B cell (primary cell): ENCODE measurements at regions of chr17 and their contacts with region 1.

Region 1: DNA sequence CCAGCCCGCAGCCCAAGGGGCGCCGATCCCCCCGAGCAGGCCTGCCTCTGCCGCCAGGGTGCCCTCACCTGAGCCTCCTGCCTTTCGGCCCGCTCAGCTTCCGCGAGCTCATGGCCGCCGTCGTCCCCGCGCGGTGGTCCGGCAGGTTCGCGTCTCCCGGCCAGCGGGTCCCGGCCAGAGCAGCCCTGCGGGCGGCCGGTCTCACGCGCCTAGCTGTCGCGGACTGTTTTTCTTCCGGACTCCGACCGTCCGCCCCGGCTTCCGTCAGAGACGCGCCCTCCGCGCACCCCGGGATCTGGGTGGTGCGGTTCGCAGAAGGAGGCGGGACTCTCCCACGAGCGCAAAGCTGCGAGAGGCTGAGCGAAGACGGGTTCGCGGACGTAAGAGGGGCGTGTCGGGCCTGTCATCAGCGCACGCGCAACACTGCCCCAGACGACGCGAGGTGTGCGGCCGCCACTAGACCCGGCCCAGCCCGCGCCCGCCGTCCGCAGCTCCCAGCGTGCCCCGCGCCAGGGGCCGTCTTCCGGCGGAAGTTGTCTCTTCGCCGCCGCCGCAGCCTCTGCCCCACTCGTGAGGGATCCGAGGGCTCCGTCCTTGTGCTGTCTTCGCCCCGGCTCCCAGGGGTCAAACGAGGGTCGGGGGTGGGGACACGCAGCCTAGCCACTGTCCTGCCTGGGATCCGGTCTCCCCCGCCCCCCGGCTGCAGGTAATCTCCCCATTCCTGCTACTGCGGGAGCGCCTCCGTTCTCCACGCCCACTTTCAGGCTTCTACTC is at the start of gene INPP5K:
- DNase-seq: peak; percentile 99
- ATAC-seq: peak; percentile 90
- H3K4me3 ChIP-seq: peak within 1 kb of the TSS; percentile 88 to 96 (median 94)
- H3K4me3 Mint-ChIP-seq: peak within 1 kb of the TSS; percentile 88
- H3K27ac ChIP-seq: peak within 1 kb of the TSS; percentile 67 to 90
- H3K27ac Mint-ChIP-seq: peak within 1 kb of the TSS; percentile 92
- H3K4me1 ChIP-seq: peaks cover 10 to 28% of the 10 kb centered on the region in 2 donors
- H3K4me1 Mint-ChIP-seq: peaks cover 21% of the 10 kb centered on the region
- H3K27me3 ChIP-seq: no peaks in the 10 kb centered on the region
- H3K27me3 Mint-ChIP-seq: no peaks in the 10 kb centered on the region
- CTCF ChIP-seq: no peak
- total RNA-seq, gene INPP5K: 76.7 and 77.9 TPM in 2 replicates

Region 2: GRCh38 chr17:1206026-1206777 is 310.4 kb before region 1 on chr17:
- CTCF ChIA-PET with region 1: no interaction called
- POLR2A ChIA-PET with region 1: no interaction called
- intact Hi-C with region 1: no loop called
- DNase-seq: no peak
- ATAC-seq: no peak
- H3K4me3 ChIP-seq: no peak overlapping the region
- H3K4me3 Mint-ChIP-seq: no peak overlapping the region
- H3K27ac ChIP-seq: no peak overlapping the region
- H3K27ac Mint-ChIP-seq: no peak overlapping the region
- H3K4me1 ChIP-seq: peaks cover 23 to 38% of the 10 kb centered on the region in 2 donors
- H3K4me1 Mint-ChIP-seq: peaks cover 38% of the 10 kb centered on the region
- H3K27me3 ChIP-seq: no peaks in the 10 kb centered on the region
- H3K27me3 Mint-ChIP-seq: no peaks in the 10 kb centered on the region
- CTCF ChIP-seq: no peak

Region 3: GRCh38 chr17:1275962-1276736 is 240.4 kb before region 1 on chr17:
- CTCF ChIA-PET with region 1: interaction called, 5 read pairs
- POLR2A ChIA-PET with region 1: no interaction called
- intact Hi-C with region 1: loop called (anchors 1 kb)
- DNase-seq: peak; percentile 79
- ATAC-seq: peak; percentile 85
- H3K4me3 ChIP-seq: no peak overlapping the region
- H3K4me3 Mint-ChIP-seq: peak overlapping the region; percentile 47
- H3K27ac ChIP-seq: no peak overlapping the region
- H3K27ac Mint-ChIP-seq: no peak overlapping the region
- H3K4me1 ChIP-seq: peaks cover 7 to 16% of the 10 kb centered on the region in 2 donors
- H3K4me1 Mint-ChIP-seq: peaks cover 18% of the 10 kb centered on the region
- H3K27me3 ChIP-seq: peaks cover 0 to 16% (median 2%) of the 10 kb centered on the region in 4 experiments
- H3K27me3 Mint-ChIP-seq: peaks cover 13% of the 10 kb centered on the region
- CTCF ChIP-seq: peak; percentile 81

Region 4: DNA sequence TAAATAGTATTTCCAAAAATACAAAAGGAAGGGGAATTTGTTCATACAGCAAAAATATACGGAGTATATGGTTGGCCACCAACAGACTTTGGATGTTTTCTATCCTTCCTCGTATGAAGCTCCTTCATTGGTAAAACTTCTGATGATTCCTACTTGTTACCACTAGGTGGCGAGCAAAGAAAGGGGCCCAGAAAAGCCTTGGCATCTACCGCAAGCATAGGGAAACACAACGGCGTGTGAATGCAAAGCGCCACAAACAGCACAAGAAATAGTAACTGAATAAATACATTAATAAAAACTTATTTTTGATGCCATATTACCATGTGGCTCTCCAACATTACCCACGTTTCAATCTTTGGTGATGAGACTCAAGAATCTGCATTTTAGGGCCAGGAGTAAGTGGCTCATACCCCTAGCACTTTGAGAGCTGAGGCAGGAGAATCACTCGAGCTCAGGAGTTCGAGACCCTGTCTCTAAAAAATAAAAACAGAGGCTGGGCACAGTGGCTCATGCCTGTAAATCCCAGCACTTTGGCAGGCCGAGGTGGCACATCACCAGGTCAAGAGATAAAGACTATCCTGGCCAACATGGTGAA is 151.0 kb before region 1 on chr17:
- CTCF ChIA-PET with region 1: interaction called, 318 read pairs
- POLR2A ChIA-PET with region 1: interaction called, 17 read pairs
- intact Hi-C with region 1: loop called (anchors 1 kb)
- DNase-seq: peak; percentile 85
- ATAC-seq: peak; percentile 69
- H3K4me3 ChIP-seq: no peak overlapping the region
- H3K4me3 Mint-ChIP-seq: peak overlapping the region; percentile 39
- H3K27ac ChIP-seq: peak overlapping the region; percentile 42 to 62
- H3K27ac Mint-ChIP-seq: peak overlapping the region; percentile 59
- H3K4me1 ChIP-seq: peaks cover 36 to 51% of the 10 kb centered on the region in 2 donors
- H3K4me1 Mint-ChIP-seq: peaks cover 56% of the 10 kb centered on the region
- H3K27me3 ChIP-seq: no peaks in the 10 kb centered on the region
- H3K27me3 Mint-ChIP-seq: no peaks in the 10 kb centered on the region
- CTCF ChIP-seq: peak; percentile 89

Region 5: DNA sequence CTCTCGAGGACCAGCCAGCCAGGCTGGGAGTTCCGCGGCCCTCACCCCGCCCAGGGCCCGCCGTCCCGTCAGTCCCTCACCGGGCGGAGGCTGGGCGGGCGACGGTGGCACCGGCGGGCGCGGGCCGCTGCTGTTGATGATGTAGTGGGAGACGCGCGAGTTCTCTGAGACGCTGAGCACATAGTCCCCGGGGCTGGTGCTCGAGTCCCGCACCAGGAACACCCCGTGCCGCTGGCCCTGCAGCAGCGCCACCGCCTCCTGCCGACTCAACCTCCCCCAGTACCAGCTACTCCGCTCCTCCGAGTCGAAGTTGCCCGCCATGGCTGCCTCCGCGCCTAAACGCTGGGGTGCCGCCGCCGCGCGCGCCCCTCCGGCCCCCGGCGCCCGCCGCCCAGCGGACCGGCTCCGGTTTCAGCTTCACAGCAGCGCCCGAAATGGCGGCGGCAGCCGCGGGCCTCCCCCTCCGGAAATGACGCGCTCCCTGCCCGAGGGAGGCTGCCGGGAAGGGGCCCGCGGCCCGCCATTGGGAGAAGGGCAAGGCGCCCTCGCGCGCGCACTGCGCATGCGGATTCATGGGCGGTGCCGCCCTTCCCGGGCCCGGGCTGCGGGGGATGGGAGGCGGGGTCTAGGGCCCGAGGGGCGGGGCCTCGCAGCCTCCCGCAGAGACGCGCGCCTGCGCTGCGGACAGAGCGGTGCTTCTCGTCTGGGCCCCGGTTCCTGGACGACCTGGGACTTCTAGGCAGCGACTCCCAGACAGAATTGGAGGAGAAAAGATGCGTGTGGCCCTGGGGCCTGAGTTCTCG is 60.6 kb before region 1 on chr17 and contains the start of gene CRK:
- CTCF ChIA-PET with region 1: interaction called, 32 read pairs
- POLR2A ChIA-PET with region 1: interaction called, 5 read pairs
- intact Hi-C with region 1: loop called (anchors 1 kb)
- DNase-seq: peak; percentile 98
- ATAC-seq: peak; percentile 92
- H3K4me3 ChIP-seq: peak within 1 kb of the TSS; percentile 68 to 94 (median 82)
- H3K4me3 Mint-ChIP-seq: peak within 1 kb of the TSS; percentile 97
- H3K27ac ChIP-seq: peak within 1 kb of the TSS; percentile 79 to 97
- H3K27ac Mint-ChIP-seq: peak within 1 kb of the TSS; percentile 96
- H3K4me1 ChIP-seq: peaks cover 15 to 24% of the 10 kb centered on the region in 2 donors
- H3K4me1 Mint-ChIP-seq: peaks cover 47% of the 10 kb centered on the region
- H3K27me3 ChIP-seq: peaks cover 0 to 5% (median 0%) of the 10 kb centered on the region in 4 experiments
- H3K27me3 Mint-ChIP-seq: peaks cover 4% of the 10 kb centered on the region
- CTCF ChIP-seq: peak; percentile 7
- total RNA-seq, gene CRK: 31.9 and 36.4 TPM in 2 replicates

Region 6: GRCh38 chr17:1495265-1495989 is 21.1 kb before region 1 on chr17:
- CTCF ChIA-PET with region 1: interaction called, 10 read pairs
- POLR2A ChIA-PET with region 1: interaction called, 3 read pairs
- intact Hi-C with region 1: loop called (anchors 1 kb)
- DNase-seq: no peak
- ATAC-seq: no peak
- H3K4me3 ChIP-seq: no peak overlapping the region
- H3K4me3 Mint-ChIP-seq: no peak overlapping the region
- H3K27ac ChIP-seq: no peak overlapping the region
- H3K27ac Mint-ChIP-seq: no peak overlapping the region
- H3K4me1 ChIP-seq: peaks cover 23 to 25% of the 10 kb centered on the region in 2 donors
- H3K4me1 Mint-ChIP-seq: peaks cover 25% of the 10 kb centered on the region
- H3K27me3 ChIP-seq: peaks cover 0 to 5% (median 0%) of the 10 kb centered on the region in 4 experiments
- H3K27me3 Mint-ChIP-seq: no peaks in the 10 kb centered on the region
- CTCF ChIP-seq: no peak

Region 7: DNA sequence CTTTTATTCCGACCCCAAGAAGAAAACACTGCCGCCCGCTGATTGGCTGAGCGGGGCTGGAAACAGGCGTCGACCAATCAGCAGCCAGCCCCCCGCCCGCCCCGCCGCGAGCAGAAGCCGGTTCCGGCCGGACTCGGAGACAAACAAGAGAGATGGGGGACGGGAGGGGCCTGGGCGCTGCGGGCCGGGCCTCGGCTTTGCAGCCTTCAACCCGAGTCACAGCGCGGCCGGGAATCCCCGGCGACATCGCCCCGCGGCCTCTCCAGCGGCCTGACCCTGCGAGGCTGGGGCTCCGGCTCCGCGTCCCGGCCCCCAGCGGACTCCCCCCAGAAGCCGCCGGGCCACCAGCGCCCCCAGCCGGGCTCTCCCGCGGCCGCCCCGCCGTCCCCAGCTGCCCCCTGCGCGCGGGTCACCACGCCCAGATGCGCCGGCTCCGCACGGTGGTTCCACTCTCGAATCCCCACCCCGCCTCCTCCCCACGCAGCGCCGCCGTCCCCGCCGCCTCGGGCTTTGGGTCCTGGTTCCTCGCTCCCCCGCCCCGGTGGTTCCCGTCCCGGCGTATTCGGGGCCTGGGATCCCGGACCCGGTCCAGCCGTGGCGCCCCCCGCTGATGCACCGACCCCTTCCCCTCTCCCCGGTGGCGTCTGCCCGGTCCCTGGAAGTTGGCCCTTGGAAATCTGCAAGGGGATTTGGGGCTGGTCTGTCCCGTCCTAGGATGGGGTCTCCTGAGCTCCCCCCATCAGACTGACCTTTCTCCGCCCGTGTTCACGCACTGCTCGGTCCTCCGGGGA is 112.5 kb after region 1 on chr17:
- CTCF ChIA-PET with region 1: interaction called, 21 read pairs
- POLR2A ChIA-PET with region 1: interaction called, 17 read pairs
- intact Hi-C with region 1: loop called (anchors 1 kb)
- DNase-seq: peak; percentile 96
- ATAC-seq: peak; percentile 64
- H3K4me3 ChIP-seq: peak overlapping the region; percentile 52 to 97 (median 92)
- H3K4me3 Mint-ChIP-seq: peak overlapping the region; percentile 93
- H3K27ac ChIP-seq: peak overlapping the region; percentile 94 to 97
- H3K27ac Mint-ChIP-seq: peak overlapping the region; percentile 98
- H3K4me1 ChIP-seq: peaks cover 49 to 57% of the 10 kb centered on the region in 2 donors
- H3K4me1 Mint-ChIP-seq: peaks cover 49% of the 10 kb centered on the region
- H3K27me3 ChIP-seq: no peaks in the 10 kb centered on the region
- H3K27me3 Mint-ChIP-seq: no peaks in the 10 kb centered on the region
- CTCF ChIP-seq: peak; percentile 36

Region 8: DNA sequence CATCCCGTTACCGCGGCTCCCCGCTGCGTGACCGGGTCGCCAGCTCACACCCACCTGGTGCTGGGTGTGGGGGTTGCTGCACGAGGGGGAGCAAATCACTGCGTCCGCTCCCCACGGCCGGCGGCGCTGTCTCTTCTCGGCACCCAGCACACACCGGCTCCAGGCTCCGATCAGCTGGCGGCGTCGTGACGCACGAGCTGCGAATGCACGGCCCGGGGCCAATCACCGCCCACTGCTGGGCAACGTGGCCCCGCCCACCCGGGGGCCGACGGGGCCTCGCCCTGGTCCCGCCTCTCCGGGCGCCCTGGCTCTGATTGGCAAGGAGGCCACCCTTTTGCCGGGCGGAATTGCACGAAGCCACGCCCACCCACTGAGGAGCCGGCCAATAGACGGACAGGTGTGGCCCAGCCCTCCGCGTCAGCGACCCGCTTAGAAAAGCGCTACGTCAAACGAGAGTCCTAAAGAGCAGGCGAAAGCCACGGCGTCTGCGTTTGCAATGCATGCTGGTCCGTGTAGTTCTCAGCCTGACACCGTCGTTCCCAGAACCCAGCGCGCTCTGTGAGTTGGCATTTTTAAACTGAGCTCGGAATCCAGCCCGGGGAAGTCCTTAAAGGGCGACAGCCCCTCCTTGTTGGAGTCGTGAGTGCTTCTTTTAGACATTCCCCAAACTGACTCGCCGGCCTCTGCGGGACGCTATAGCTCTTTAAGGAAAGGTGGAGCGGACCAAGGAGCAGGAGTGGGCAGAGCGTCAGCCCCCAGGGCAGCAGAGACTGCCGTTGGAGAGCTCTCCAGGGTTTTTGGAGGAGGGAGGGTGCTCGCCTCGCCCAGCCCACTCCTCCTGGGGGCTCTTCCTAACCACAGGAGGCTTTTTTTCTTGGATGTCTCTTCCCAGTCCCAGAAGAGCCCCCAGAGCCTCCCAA is 199.8 kb after region 1 on chr17:
- CTCF ChIA-PET with region 1: interaction called, 3 read pairs
- POLR2A ChIA-PET with region 1: no interaction called
- intact Hi-C with region 1: loop called (anchors 1 kb)
- DNase-seq: peak; percentile 100
- ATAC-seq: peak; percentile 88
- H3K4me3 ChIP-seq: peak overlapping the region; percentile 63 to 88 (median 84)
- H3K4me3 Mint-ChIP-seq: peak overlapping the region; percentile 93
- H3K27ac ChIP-seq: peak overlapping the region; percentile 67 to 75
- H3K27ac Mint-ChIP-seq: peak overlapping the region; percentile 89
- H3K4me1 ChIP-seq: peaks cover 26 to 39% of the 10 kb centered on the region in 2 donors
- H3K4me1 Mint-ChIP-seq: peaks cover 32% of the 10 kb centered on the region
- H3K27me3 ChIP-seq: peaks cover 0 to 28% (median 8%) of the 10 kb centered on the region in 4 experiments
- H3K27me3 Mint-ChIP-seq: peaks cover 28% of the 10 kb centered on the region
- CTCF ChIP-seq: no peak